Astrocyte of the cerebellum (primary cell): ENCODE measurements at regions of chr11 and their contacts with region 1.

Region 1: DNA sequence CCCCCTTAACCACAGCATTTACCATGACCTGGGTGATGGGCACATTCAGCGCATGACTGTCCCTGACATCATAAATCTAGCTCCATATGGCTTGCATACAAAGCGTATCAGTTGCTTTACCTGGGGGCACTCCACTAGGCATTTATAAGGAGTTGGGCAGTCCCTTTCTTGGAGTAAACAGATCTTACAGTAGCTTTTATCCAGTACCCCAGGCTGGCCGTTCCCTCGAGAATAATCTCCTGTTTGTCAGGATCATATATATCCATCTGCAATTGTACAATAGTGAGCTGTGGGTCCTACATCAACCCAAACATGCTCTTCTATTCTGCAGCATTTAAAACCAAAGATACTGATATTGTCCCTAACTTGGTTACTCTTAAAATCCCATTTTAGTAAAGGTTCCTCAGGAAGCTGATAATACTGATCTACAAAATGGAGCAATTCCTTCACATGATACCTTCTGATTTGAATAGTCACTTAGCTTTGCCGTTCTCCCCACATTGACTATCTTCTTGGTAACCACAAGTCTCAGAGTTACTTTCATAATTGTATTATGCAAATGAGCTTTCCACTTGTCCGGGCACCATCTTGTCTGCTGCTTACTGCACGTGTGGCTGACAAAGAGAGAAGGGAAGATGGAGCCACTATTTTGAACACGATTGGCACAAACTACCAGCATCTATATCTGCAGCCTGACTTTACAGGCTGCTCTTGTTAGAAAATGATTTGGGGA is 205.0 kb downstream of the CWF19L2 start:
- DNase-seq: no peak
- H3K4me3 ChIP-seq: no peak overlapping the region
- CTCF ChIP-seq: no peak

Region 2: DNA sequence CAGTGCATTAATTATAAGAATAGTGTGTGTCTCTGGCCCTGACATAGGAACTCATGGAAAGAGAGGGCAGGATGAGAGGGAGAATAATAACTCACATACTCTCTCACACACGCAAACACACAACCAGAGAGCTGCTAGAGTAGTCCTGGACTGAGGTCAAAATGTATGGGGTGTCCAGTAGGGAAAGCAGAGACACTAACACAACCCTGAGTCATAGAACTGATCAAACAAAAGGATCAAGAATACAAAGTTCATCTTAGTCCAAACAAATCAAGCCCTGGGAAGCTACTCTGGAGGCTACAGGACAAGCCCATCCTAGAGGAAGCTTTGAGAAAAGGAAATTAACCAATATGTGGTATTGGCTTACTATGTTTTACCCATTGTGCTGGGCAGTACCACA is 55.9 kb before region 1 on chr11:
- in situ Hi-C with region 1: loop called (anchors 10 kb)
- DNase-seq: no peak
- H3K4me3 ChIP-seq: no peak overlapping the region
- CTCF ChIP-seq: no peak

Region 3: DNA sequence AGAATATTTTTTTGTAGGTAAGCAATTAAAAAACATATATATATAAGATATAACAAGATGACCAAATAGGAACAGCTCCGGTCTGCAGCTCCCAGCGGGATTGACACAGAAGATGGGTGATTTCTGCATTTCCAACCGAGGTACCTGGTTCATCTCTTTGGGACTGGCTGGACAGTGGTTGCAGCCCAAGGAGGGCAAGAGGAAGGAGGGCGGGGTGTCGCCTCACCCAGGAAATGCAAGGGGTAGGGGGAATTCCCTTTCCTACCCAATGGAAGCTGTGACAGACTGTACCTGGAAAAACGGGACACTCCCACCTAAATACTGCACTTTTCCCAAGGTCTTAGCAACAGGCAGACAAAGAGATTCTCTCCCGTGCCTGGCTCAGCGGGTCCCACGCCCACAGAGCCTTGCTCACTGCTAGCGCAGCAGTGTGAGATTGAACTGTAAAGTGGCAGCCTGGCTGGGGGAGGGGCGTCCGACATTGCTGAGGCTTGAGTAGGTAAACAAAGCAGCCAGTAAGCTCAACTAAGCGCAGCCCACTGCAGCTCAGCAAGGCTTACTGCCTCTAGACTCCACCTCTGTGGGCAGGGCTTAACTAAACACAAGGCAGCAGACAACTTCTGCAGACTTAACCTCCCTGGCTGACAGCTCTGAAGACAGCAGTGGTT is 41.2 kb after region 1 on chr11:
- in situ Hi-C with region 1: loop called (anchors 5 kb)
- DNase-seq: no peak
- H3K4me3 ChIP-seq: no peak overlapping the region
- CTCF ChIP-seq: no peak

Region 4: GRCh38 chr11:107307991-107308390 is 55.4 kb after region 1 on chr11:
- in situ Hi-C with region 1: no loop called
- DNase-seq: no peak
- H3K4me3 ChIP-seq: no peak overlapping the region
- CTCF ChIP-seq: no peak